ENCODE measurements at regions of chr1 and their contacts with region 1.

Region 1: DNA sequence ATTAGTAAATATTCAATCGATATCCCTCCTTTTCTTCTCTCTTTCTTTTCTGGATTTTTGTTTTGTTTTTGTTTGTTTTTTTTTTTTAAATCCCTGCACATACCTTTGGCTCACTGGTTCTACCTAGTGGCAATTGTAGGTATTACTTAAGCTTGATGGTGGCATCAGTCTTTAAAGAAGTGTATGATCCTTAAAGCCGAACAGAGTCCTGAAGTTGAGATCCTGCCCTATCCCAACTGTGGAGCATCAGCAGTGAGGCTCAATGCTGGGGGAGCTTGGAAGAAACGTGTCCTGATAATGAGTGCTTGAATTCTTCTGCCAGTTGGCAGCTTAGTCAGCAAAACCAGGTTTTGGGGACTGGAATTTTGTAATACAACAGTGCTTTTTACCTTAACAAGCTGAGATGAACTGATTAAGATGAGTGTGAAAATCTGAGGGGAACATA is 60.8 kb downstream of the FASLG start:
- DNase-seq: peak; percentile 49
- H3K4me3 ChIP-seq: no peak overlapping the region
- H3K27ac ChIP-seq: no peak overlapping the region
- H3K4me1 ChIP-seq: no peaks in the 10 kb centered on the region
- H3K27me3 ChIP-seq: no peaks in the 10 kb centered on the region
- CTCF ChIP-seq: peak; percentile 80

Region 2: DNA sequence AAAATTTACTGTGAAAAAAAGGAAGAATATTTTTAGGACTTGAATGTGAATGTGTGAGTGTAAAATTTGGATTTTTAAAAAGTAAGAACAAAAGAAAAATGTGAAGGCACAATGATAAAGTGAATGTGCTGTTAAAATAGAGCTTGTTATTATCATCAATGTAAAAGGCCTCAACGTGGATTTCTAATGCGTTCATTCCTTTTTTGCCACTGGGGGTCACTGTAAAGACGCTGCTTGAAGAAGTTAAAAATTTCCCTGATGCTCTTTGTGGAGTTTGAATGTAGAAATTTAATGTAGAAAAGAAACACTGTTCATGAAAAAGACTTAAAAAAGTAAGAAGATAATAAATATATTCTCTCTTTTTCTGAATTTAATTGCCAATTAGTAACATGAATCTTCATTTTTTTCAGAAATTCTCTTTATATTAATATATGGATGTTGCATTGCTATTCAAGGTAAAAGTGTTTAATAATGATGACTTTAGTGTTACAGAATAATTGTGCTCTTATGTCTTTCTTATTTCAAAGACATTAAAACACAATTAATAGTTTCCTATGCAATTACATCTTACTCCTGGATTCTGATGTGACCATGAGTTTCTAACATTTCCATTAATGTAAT is 716.9 kb before region 1 on chr1:
- CTCF ChIA-PET with region 1: interaction called, 4 read pairs
- POLR2A ChIA-PET with region 1: no interaction called
- intact Hi-C with region 1: loop called (anchors 10 kb)
- DNase-seq: peak; percentile 83
- H3K4me3 ChIP-seq: no peak overlapping the region
- H3K27ac ChIP-seq: no peak overlapping the region
- H3K4me1 ChIP-seq: no peaks in the 10 kb centered on the region
- H3K27me3 ChIP-seq: no peaks in the 10 kb centered on the region
- CTCF ChIP-seq: peak; percentile 86

Region 3: DNA sequence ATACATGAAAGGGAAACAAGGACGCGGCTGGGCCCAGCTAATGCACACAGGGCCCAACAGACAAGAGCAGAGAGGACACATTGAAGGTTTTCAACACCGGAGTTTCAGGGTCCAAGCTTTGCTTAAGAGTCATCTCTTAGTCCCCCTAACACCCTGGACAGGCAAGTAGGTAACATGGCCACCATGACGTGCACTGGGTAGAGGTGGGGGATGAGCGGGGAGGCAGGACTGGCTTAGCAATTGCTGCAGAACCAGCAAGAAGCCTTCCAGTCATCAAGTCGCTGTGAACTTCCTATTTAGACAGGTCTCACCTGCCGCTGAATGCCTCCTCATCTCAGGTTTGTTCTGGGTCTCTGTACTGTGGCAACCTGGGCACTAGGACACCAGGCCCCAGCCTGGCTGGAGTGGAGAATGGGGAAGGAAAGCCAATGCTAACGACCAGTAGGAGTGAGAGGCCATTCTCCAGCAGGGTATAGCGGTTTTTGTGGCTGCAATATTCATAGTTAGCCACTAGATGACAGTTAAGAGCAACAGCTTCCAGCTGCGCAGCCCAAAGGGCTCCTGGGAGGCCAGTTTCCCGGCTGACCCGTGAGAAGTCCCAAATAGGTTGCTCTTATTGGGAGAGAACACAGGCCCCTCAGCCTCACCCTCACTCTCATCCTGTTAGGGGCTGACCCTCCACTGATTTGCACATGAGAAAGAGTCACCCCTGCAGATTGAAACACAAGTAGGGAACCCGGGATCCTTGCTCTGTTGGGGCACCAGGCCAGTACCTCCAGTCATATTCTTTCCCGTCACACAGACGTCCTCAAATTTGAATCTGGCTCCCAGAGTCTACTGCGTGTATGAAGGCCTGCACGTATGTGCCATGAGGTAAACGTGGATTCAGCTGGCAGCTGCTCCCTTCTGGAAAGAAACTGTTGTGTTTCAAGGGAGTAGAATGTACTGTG is 269.9 kb before region 1 on chr1:
- CTCF ChIA-PET with region 1: interaction called, 9 read pairs
- POLR2A ChIA-PET with region 1: no interaction called
- intact Hi-C with region 1: loop called (anchors 1 kb)
- DNase-seq: peak; percentile 70
- H3K4me3 ChIP-seq: no peak overlapping the region
- H3K27ac ChIP-seq: no peak overlapping the region
- H3K4me1 ChIP-seq: no peaks in the 10 kb centered on the region
- H3K27me3 ChIP-seq: no peaks in the 10 kb centered on the region
- CTCF ChIP-seq: peak; percentile 83

Region 4: DNA sequence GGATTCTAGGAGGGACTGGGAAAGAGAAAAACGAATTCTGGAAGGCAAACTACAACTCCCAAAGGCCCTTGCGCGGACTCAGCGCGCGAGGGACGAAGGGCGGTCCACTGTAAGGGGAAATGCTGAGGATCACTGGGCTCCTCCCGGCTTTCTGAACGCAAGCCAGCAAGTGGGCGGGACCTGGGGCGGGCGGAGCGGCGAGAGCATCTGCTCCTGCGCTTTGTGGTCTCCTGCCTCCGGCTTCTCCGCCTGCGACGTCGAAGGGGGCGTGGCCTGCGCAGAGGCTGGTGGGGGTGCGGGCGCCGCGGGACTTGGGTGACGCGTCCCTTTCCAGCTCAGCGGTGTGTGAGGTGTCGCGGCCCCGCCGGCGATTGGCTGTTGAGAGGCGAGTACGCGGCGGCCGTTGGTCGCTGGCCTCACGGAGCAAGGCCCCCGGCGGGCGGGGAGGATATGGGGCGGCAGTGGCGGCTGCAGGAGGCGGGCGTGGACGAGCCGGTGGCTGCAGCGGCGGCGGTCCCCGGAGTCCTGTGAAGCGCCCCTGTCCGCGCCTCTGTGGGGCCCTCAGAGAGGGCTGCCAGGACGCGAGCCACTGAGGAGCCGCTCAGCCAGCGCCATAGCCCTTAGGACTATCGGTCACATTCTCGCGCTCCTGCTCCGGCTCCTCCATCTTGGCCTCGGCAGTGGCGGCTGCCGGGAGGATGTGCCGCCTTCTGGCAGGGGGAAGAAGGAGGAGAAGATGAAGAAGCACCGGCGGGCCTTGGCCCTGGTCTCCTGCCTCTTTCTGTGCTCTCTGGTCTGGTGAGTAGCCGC is 186.8 kb before region 1 on chr1 and contains the start of gene SUCO:
- CTCF ChIA-PET with region 1: no interaction called
- POLR2A ChIA-PET with region 1: no interaction called
- intact Hi-C with region 1: loop called (anchors 10 kb)
- DNase-seq: peak; percentile 100
- H3K4me3 ChIP-seq: peak within 1 kb of the TSS; percentile 86
- H3K27ac ChIP-seq: peak within 1 kb of the TSS; percentile 94
- H3K4me1 ChIP-seq: peaks cover 28% of the 10 kb centered on the region
- H3K27me3 ChIP-seq: no peaks in the 10 kb centered on the region
- CTCF ChIP-seq: 0 out of 2 replicates have a peak, but pooled peaks have one; percentile 21
- total RNA-seq, gene SUCO: 32.9 and 35.1 TPM in 2 replicates

Region 5: DNA sequence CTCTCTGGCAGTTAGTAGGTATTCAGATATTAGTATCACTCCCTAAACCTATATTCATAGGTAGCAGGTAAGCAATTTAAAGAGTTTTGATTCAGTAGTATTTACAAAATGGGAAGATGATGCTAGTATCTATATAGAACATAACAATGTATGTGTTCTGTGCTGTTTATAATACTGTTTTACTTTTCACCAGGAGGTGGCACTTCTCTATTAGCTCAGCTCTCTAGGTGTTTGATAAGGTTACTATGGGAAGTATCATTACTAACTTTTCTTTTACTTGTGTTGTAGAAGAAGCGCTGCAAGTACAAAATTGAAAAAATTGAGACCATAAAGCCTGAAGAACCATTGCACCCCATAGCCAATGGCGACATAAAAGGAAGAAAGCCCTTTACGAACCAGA is 110.2 kb before region 1 on chr1:
- CTCF ChIA-PET with region 1: interaction called, 10 read pairs
- POLR2A ChIA-PET with region 1: no interaction called
- intact Hi-C with region 1: loop called (anchors 5 kb)
- DNase-seq: peak; percentile 16
- H3K4me3 ChIP-seq: no peak overlapping the region
- H3K27ac ChIP-seq: no peak overlapping the region
- H3K4me1 ChIP-seq: no peaks in the 10 kb centered on the region
- H3K27me3 ChIP-seq: no peaks in the 10 kb centered on the region
- CTCF ChIP-seq: peak; percentile 52

Region 6: GRCh38 chr1:172699111-172699510 is 20.6 kb before region 1 on chr1:
- CTCF ChIA-PET with region 1: no interaction called
- POLR2A ChIA-PET with region 1: no interaction called
- intact Hi-C with region 1: no loop called
- DNase-seq: no peak
- H3K4me3 ChIP-seq: no peak overlapping the region
- H3K27ac ChIP-seq: no peak overlapping the region
- H3K4me1 ChIP-seq: no peaks in the 10 kb centered on the region
- H3K27me3 ChIP-seq: no peaks in the 10 kb centered on the region
- CTCF ChIP-seq: no peak

Region 7: GRCh38 chr1:172883107-172883791 is 163.5 kb after region 1 on chr1:
- CTCF ChIA-PET with region 1: no interaction called
- POLR2A ChIA-PET with region 1: no interaction called
- intact Hi-C with region 1: no loop called
- DNase-seq: no peak
- H3K4me3 ChIP-seq: no peak overlapping the region
- H3K27ac ChIP-seq: no peak overlapping the region
- H3K4me1 ChIP-seq: no peaks in the 10 kb centered on the region
- H3K27me3 ChIP-seq: no peaks in the 10 kb centered on the region
- CTCF ChIP-seq: no peak

Measured in A673 (cell line).